ENCODE measurements at regions of chr18 and their contacts with region 1.

Region 1: DNA sequence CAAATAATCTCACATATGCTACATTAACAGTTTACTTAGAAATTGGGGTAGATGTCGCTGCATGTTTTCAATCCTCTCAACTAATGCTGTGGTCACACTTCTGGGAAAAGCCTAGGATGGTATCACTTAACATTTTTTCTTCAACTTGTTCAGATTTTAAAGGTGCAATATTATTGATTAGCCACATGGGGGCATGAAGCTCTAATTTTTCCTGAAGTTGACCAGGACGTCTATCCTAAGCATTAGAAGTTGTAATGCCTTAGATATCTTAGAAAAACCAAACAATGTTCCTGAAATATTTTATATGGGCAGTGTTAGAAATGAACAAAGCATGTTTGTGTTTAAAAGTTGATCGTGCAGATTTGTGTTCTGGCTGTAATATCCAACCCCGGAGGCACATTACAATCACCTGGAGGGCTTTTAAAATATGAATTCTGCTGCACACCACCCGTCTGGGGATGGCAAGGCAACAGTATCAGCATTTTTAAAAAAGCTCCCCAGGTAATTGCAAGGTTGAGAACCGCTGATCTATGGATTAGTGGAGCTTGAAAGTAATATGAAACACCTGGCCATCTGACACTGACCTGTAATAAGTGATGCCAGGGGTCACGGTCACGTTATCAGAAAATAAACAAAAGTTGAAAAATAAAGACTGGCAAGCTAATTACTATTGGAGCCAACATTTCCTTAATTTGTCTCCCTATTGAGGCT is 100.5 kb upstream of the LMAN1 start:
- DNase-seq: no peak
- ATAC-seq: peak; percentile 60
- H3K4me3 ChIP-seq: no peak overlapping the region
- H3K27ac ChIP-seq: no peak overlapping the region
- H3K4me1 ChIP-seq: peaks cover 5% of the 10 kb centered on the region
- H3K27me3 ChIP-seq: no peaks in the 10 kb centered on the region
- CTCF ChIP-seq: peak; percentile 56

Region 2: DNA sequence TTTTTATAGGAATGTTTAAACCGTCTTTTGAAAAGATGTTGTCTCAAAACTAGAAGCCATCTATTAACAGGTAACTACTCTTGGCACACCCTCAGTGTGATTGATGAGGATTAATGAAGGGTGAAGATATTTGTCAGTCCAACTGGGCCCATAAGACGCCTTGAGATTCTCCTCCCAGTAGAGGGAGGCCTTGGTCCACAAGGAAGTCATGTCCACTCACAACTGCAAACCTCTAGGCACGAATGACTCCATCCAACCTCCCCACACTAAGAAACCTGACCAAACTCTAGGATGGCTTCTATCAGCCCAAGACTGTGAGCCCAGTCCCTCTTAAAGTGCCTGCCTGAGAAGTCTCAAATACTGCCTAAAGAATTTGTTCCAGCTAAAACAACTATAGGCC is 258.7 kb before region 1 on chr18:
- intact Hi-C with region 1: no loop called
- DNase-seq: no peak
- ATAC-seq: no peak
- H3K4me3 ChIP-seq: no peak overlapping the region
- H3K27ac ChIP-seq: no peak overlapping the region
- H3K4me1 ChIP-seq: no peaks in the 10 kb centered on the region
- H3K27me3 ChIP-seq: peaks cover 4% of the 10 kb centered on the region
- CTCF ChIP-seq: no peak

Region 3: GRCh38 chr18:59823596-59824195 is 364.2 kb after region 1 on chr18:
- intact Hi-C with region 1: loop called (anchors 10 kb)
- DNase-seq: no peak
- ATAC-seq: peak; percentile 94
- H3K4me3 ChIP-seq: no peak overlapping the region
- H3K27ac ChIP-seq: no peak overlapping the region
- H3K4me1 ChIP-seq: no peaks in the 10 kb centered on the region
- H3K27me3 ChIP-seq: no peaks in the 10 kb centered on the region
- CTCF ChIP-seq: peak; percentile 79

Measured in upper lobe of right lung (tissue), 1 donor.